Dendritic cell treated with granulocyte-macrophage colony-stimulating factor and Interleukin-4, amounts not matched to agents 40 ng/mL and 50 ng/mL, for 4 days (primary cell): ENCODE measurements at regions of chr17 and their contacts with region 1.

Region 1: DNA sequence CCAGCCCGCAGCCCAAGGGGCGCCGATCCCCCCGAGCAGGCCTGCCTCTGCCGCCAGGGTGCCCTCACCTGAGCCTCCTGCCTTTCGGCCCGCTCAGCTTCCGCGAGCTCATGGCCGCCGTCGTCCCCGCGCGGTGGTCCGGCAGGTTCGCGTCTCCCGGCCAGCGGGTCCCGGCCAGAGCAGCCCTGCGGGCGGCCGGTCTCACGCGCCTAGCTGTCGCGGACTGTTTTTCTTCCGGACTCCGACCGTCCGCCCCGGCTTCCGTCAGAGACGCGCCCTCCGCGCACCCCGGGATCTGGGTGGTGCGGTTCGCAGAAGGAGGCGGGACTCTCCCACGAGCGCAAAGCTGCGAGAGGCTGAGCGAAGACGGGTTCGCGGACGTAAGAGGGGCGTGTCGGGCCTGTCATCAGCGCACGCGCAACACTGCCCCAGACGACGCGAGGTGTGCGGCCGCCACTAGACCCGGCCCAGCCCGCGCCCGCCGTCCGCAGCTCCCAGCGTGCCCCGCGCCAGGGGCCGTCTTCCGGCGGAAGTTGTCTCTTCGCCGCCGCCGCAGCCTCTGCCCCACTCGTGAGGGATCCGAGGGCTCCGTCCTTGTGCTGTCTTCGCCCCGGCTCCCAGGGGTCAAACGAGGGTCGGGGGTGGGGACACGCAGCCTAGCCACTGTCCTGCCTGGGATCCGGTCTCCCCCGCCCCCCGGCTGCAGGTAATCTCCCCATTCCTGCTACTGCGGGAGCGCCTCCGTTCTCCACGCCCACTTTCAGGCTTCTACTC is at the start of gene INPP5K:
- H3K4me3 Mint-ChIP-seq: peak within 1 kb of the TSS; percentile 81
- H3K27ac Mint-ChIP-seq: peak within 1 kb of the TSS; percentile 79
- H3K4me1 Mint-ChIP-seq: peaks cover 52% of the 10 kb centered on the region
- H3K27me3 Mint-ChIP-seq: no peaks in the 10 kb centered on the region

Region 2: DNA sequence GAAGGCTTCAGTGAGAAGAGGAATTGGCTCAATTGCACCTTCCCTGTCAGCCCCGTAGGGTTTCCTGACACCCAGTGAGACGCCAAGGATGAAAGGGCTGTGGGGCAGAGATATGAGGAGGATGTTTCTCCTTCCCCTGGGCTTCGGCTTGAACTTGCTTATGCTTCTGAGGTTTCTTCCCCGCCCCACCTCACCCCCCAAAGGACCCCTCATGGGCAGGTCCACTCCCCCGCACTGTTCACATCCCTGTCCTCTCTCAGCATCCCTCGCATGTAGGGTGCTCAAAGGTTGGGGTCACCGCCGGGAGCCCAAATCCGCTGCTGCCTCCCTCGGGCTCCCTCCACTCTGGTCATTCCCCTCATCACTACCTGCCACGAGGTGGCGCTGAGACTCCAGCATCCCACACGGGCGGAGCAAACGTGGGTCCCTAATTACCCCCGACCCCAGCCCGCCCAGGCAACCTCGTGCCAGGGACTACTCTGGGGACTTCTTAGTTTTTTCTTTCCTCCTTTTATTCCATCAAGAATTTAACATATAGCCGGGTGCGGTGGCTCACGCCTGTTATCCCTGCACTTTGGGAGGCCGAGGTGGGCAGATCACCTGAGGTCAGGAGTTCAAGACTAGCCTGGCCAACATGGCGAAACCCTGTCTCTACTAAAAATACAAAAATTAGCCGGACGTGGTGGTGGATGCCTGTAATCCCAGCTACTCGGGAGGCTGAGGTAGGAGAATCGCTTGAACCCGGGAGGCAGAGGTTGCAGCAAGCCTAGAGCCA is 240.4 kb before region 1 on chr17:
- intact Hi-C with region 1: loop called (anchors 5 kb)
- H3K4me3 Mint-ChIP-seq: no peak overlapping the region
- H3K27ac Mint-ChIP-seq: peak overlapping the region; percentile 18
- H3K4me1 Mint-ChIP-seq: peaks cover 14% of the 10 kb centered on the region
- H3K27me3 Mint-ChIP-seq: peaks cover 80% of the 10 kb centered on the region

Region 3: GRCh38 chr17:1365445-1366039 is 151.0 kb before region 1 on chr17:
- intact Hi-C with region 1: loop called (anchors 1 kb)
- H3K4me3 Mint-ChIP-seq: no peak overlapping the region
- H3K27ac Mint-ChIP-seq: no peak overlapping the region
- H3K4me1 Mint-ChIP-seq: peaks cover 49% of the 10 kb centered on the region
- H3K27me3 Mint-ChIP-seq: no peaks in the 10 kb centered on the region

Region 4: GRCh38 chr17:1455797-1456599 is 60.6 kb before region 1 on chr17 and contains the start of gene CRK:
- intact Hi-C with region 1: loop called (anchors 1 kb)
- H3K4me3 Mint-ChIP-seq: peak within 1 kb of the TSS; percentile 87
- H3K27ac Mint-ChIP-seq: peak within 1 kb of the TSS; percentile 86
- H3K4me1 Mint-ChIP-seq: peaks cover 62% of the 10 kb centered on the region
- H3K27me3 Mint-ChIP-seq: peaks cover 25% of the 10 kb centered on the region

Region 5: DNA sequence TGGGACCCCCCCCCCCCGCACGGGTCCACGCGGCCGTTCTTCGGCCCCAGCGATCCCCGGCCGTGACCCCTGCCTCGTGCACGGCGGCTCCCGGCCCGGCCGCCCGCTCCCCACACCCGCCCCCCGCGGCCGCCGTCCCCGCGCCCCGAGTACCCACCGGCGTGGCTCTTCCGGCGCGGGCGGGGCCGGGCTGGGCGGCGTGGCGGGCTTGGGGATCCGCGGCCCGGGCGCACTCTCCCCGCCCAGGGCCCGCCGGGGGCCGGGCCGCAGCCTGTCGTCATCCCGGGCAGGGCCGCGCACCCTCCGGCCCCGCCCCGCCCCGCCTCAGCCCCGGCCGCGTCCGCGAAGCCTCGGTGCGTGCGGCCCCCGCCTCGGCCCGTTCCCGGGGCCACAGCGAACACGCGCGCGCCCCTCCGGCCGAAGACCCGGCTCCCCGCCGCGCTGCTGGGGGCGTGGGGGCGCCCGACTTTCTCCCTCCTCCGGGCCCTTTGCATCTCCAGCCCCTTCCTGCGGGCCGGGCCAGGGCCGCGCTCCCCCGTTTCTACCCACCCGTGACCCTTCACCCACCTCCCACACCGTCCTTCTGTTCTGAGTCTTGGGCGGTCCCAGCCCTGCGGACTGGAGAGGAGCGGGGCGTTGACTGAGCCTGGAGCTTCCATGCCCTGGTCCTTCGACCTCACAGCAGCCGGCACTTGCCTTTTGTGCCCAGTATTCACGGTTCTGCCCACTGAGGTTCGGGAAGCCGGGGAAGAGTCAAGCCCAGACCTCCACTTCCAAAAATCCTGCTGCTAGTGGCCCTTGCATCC is 24.9 kb before region 1 on chr17:
- intact Hi-C with region 1: loop called (anchors 2 kb)
- H3K4me3 Mint-ChIP-seq: peak overlapping the region; percentile 90
- H3K27ac Mint-ChIP-seq: peak overlapping the region; percentile 86
- H3K4me1 Mint-ChIP-seq: peaks cover 67% of the 10 kb centered on the region
- H3K27me3 Mint-ChIP-seq: peaks cover 12% of the 10 kb centered on the region